ENCODE measurements at regions of chr14 and their contacts with region 1.

Region 1: DNA sequence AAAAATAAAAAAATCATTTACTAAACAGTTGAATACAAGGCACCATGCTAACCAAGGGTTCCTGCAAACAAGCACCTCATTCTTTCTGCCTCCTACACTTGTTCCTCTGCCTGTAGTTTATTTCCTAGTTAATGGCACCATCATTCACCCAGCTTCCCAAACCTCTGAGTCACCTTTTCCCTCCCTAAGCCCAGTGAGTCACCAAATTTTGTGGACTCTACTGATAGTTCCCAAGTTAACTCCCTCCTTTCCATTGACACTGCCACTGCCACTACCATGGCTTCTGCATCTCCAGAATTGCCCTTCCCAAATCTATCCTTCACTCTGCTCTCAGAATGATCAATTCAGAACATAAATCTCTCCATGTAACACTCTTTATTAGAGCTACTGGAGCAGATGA is 2.0 kb upstream of the GARIN2 start:
- DNase-seq: peak in 1 of 4 experiments; percentile 9
- ATAC-seq: no peak
- H3K4me3 ChIP-seq: no peak overlapping the region
- H3K27ac ChIP-seq: no peak overlapping the region
- H3K4me1 ChIP-seq: peaks cover 0 to 8% of the 10 kb centered on the region in 2 experiments; a peak in 1 of 5 replicates
- H3K27me3 ChIP-seq: no peaks in the 10 kb centered on the region
- CTCF ChIP-seq: no peak
- EP300 ChIP-seq: no peak
- POLR2A ChIP-seq: no peak
- RAD21 ChIP-seq: no peak

Region 2: DNA sequence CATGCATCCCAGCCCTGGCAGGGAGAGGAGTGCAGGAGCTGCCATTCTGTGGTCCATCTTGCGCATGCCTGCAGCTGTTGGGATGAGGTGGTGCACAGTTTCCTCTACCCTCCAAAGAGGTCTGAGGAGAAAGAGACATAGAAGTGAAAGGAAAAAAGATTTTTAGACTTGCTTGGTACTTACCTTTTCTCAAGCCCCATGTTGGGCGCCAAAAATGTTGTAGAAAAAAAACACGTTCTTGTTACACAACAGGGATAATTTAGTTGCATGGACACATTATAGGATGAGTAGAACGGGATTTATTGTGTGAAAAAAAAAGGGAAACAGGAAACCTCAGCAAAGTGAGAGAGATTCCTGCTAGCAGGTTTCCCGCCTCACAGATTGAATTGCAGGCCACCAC is 242.3 kb before region 1 on chr14:
- CTCF ChIA-PET with region 1: no interaction called
- POLR2A ChIA-PET with region 1: no interaction called
- in situ Hi-C with region 1: loop called (anchors 5 kb)
- intact Hi-C with region 1: no loop called
- DNase-seq: peak in 1 of 4 experiments; percentile 31
- ATAC-seq: no peak
- H3K4me3 ChIP-seq: no peak overlapping the region
- H3K27ac ChIP-seq: no peak overlapping the region
- H3K4me1 ChIP-seq: no peaks in the 10 kb centered on the region
- H3K27me3 ChIP-seq: no peaks in the 10 kb centered on the region
- CTCF ChIP-seq: no peak
- EP300 ChIP-seq: no peak
- POLR2A ChIP-seq: no peak
- RAD21 ChIP-seq: no peak

Region 3: GRCh38 chr14:66965831-66966230 is 221.4 kb before region 1 on chr14:
- CTCF ChIA-PET with region 1: no interaction called
- POLR2A ChIA-PET with region 1: no interaction called
- in situ Hi-C with region 1: no loop called
- intact Hi-C with region 1: loop called (anchors 5 kb)
- DNase-seq: no peak
- ATAC-seq: no peak
- H3K4me3 ChIP-seq: no peak overlapping the region
- H3K27ac ChIP-seq: no peak overlapping the region
- H3K4me1 ChIP-seq: no peaks in the 10 kb centered on the region
- H3K27me3 ChIP-seq: no peaks in the 10 kb centered on the region
- CTCF ChIP-seq: no peak
- EP300 ChIP-seq: no peak
- POLR2A ChIP-seq: no peak
- RAD21 ChIP-seq: no peak

Region 4: DNA sequence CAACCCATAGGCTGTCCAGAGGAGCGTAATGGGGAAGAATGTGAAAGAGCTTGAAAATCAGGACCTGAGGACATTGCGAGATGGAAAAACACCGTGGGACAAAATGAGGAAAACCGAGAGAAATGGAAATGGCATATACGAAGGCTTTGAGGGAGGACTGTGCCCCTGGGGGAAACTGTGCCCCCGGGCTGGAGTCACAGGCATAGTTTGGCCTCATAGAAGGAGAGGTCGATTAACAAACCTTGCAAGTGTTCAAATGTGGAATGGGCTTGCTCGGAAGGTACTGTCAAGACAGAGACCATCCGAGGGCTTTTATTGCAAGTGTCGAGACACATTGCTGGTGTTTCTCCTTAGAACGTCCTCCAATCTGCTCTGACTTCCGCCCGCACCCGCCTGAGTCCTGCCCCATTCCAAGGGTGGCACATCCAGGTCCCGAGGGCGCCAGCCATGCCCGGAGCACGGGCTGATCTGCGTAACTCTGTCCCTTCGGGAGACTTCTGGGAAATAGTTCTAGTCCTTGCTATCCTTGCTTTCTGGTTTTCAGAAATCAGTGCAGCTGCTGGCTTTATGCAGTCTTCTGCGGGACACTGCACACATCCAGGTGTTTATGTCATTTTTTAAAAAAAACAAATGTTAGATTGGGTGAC is 53.2 kb after region 1 on chr14:
- CTCF ChIA-PET with region 1: no interaction called
- POLR2A ChIA-PET with region 1: no interaction called
- in situ Hi-C with region 1: no loop called
- intact Hi-C with region 1: no loop called
- DNase-seq: peak in 1 of 4 experiments; percentile 10
- ATAC-seq: peak; percentile 1; the same call in 2 of the 3 replicates
- H3K4me3 ChIP-seq: peak overlapping the region; percentile 81
- H3K27ac ChIP-seq: no peak overlapping the region
- H3K4me1 ChIP-seq: peaks cover 3 to 6% of the 10 kb centered on the region in 2 experiments; a peak in 2 of 5 replicates
- H3K27me3 ChIP-seq: no peaks in the 10 kb centered on the region
- CTCF ChIP-seq: no peak
- EP300 ChIP-seq: no peak
- POLR2A ChIP-seq: no peak
- RAD21 ChIP-seq: no peak